HepG2 (cell line): ENCODE measurements at regions of chr1 and their contacts with region 1.

Region 1: GRCh38 chr1:180291004-180291403 is 60.9 kb downstream of the LHX4 start:
- DNase-seq: peak; percentile 55
- ATAC-seq: peak; percentile 60
- H3K4me3 ChIP-seq: no peak overlapping the region
- H3K27ac ChIP-seq: peak overlapping the region; percentile 45
- H3K4me1 ChIP-seq: peaks cover 22% of the 10 kb centered on the region
- H3K27me3 ChIP-seq: no peaks in the 10 kb centered on the region
- CTCF ChIP-seq: no peak
- EP300 ChIP-seq: peak in 1 of 2 experiments; percentile 51; a peak in 1 of 4 replicates
- POLR2A ChIP-seq: no peak
- RAD21 ChIP-seq: no peak

Region 2: GRCh38 chr1:180269761-180270527 is 21.1 kb before region 1 on chr1:
- CTCF ChIA-PET with region 1: no interaction called
- POLR2A ChIA-PET with region 1: no interaction called
- in situ Hi-C with region 1: no loop called
- intact Hi-C with region 1: loop called (anchors 1 kb)
- DNase-seq: peak; percentile 69
- ATAC-seq: peak; percentile 90
- H3K4me3 ChIP-seq: peak overlapping the region in 1 of 3 experiments; percentile 8; a peak in 1 of 6 replicates
- H3K27ac ChIP-seq: no peak overlapping the region
- H3K4me1 ChIP-seq: peaks cover 36% of the 10 kb centered on the region
- H3K27me3 ChIP-seq: 0 out of 5 replicates have a peak, but pooled peaks cover 0 to under 1% of the 10 kb centered on the region in 2 experiments
- CTCF ChIP-seq: peak; percentile 67
- EP300 ChIP-seq: no peak
- POLR2A ChIP-seq: no peak
- RAD21 ChIP-seq: no peak